Posterior vena cava (tissue), 2 donors: ENCODE measurements at regions of chr4 and their contacts with region 1.

Region 1: DNA sequence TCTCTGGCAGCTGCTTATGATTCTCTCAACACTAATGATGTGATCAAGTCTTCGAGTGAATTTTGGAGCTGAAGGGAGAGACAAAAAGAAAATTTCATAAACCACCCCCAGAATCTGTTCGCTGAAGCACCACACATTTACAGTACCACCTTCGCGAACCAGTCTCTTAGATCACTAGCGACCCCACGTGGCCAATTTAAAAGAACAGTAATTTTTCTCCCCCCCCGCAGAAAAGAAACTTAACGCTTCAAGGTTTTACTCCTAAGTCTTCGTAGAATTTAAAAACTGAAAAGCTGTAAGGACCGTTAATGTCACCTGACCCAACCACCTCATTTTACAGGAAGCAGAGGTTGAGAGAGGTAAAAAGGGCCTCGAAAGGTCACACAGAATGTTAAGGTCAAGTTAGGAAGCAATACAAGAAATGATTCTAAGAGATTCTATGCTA is 187.5 kb downstream of the QDPR start:
- DNase-seq: no peak

Region 2: GRCh38 chr4:16289897-16290554 is 1034.4 kb before region 1 on chr4:
- intact Hi-C with region 1: loop called in 1 of 2 experiments (anchors 10 kb)
- DNase-seq: no peak

Region 3: DNA sequence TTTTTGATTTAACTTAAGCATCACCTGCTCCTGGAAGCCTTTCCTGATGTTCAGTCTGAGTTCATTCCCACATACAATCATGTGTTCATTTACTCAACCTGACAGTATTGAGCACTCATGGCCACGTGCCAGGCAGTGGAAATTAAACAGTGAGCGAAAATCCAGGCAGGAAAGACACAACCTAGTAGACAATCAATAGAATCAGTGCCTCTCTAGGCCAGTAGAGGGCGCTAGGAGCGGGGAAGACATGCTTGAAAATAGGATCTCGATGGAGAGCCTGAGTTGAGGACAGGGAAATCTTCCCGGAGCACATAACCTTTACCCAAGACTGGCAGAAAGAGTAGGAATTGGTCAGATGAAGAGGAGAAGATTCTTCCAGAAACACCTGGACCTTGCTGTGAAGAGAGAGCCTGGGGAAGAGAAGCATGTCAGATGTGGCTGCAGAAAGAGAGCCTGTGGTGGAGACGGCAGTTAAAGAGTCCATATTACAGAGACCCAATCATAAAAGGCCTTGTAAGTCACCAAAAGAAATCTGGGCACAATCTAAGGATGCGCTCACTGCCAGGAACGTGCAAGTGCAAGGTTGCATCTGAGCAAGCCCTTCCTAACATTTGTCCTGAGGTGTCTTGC is 529.5 kb before region 1 on chr4:
- intact Hi-C with region 1: loop called in 1 of 2 experiments (anchors 10 kb)
- DNase-seq: no peak

Region 4: GRCh38 chr4:16926214-16926613 is 398.2 kb before region 1 on chr4:
- intact Hi-C with region 1: loop called in 1 of 2 experiments (anchors 10 kb)
- DNase-seq: no peak